ENCODE measurements at regions of chr14 and their contacts with region 1.

Region 1: GRCh38 chr14:49620182-49621113 is at the starts of genes MGAT2 and RPL36AL:
- DNase-seq: peak; percentile 99
- H3K4me3 ChIP-seq: peak within 1 kb of the TSS; percentile 84
- H3K4me3 Mint-ChIP-seq: peak within 1 kb of the TSS; percentile 91
- H3K27ac Mint-ChIP-seq: peak within 1 kb of the TSS; percentile 93
- H3K4me1 ChIP-seq: peaks cover 27% of the 10 kb centered on the region
- H3K4me1 Mint-ChIP-seq: peaks cover 16% of the 10 kb centered on the region
- H3K27me3 ChIP-seq: no peaks in the 10 kb centered on the region
- H3K27me3 Mint-ChIP-seq: no peaks in the 10 kb centered on the region
- CTCF ChIP-seq: peak in 1 of 2 experiments; percentile 28
- total RNA-seq, gene MGAT2: 42.1 and 47.5 TPM in 2 replicates
- total RNA-seq, gene RPL36AL: 181 and 191 TPM in 2 replicates

Region 2: GRCh38 chr14:49598485-49599300 is 21.8 kb before region 1 on chr14 and contains the start of gene LRR1:
- CTCF ChIA-PET with region 1: interaction called, 3 read pairs
- POLR2A ChIA-PET with region 1: interaction called, 14 read pairs
- intact Hi-C with region 1: loop called (anchors 1 kb)
- DNase-seq: peak; percentile 91 to 94
- H3K4me3 ChIP-seq: peak within 1 kb of the TSS; percentile 78
- H3K4me3 Mint-ChIP-seq: peak within 1 kb of the TSS; percentile 97
- H3K27ac Mint-ChIP-seq: peak within 1 kb of the TSS; percentile 97
- H3K4me1 ChIP-seq: peaks cover 24% of the 10 kb centered on the region
- H3K4me1 Mint-ChIP-seq: peaks cover 25% of the 10 kb centered on the region
- H3K27me3 ChIP-seq: no peaks in the 10 kb centered on the region
- H3K27me3 Mint-ChIP-seq: no peaks in the 10 kb centered on the region
- CTCF ChIP-seq: no peak
- total RNA-seq, gene LRR1: 32.0 and 34.8 TPM in 2 replicates

Region 3: GRCh38 chr14:49653508-49653907 is 33.1 kb after region 1 on chr14:
- CTCF ChIA-PET with region 1: no interaction called
- POLR2A ChIA-PET with region 1: no interaction called
- intact Hi-C with region 1: no loop called
- DNase-seq: no peak
- H3K4me3 ChIP-seq: no peak overlapping the region
- H3K4me3 Mint-ChIP-seq: no peak overlapping the region
- H3K27ac Mint-ChIP-seq: no peak overlapping the region
- H3K4me1 ChIP-seq: no peaks in the 10 kb centered on the region
- H3K4me1 Mint-ChIP-seq: no peaks in the 10 kb centered on the region
- H3K27me3 ChIP-seq: no peaks in the 10 kb centered on the region
- H3K27me3 Mint-ChIP-seq: no peaks in the 10 kb centered on the region
- CTCF ChIP-seq: no peak

Region 4: GRCh38 chr14:49703965-49704364 is 83.5 kb after region 1 on chr14:
- CTCF ChIA-PET with region 1: no interaction called
- POLR2A ChIA-PET with region 1: no interaction called
- intact Hi-C with region 1: no loop called
- DNase-seq: no peak
- H3K4me3 ChIP-seq: no peak overlapping the region
- H3K4me3 Mint-ChIP-seq: no peak overlapping the region
- H3K27ac Mint-ChIP-seq: no peak overlapping the region
- H3K4me1 ChIP-seq: no peaks in the 10 kb centered on the region
- H3K4me1 Mint-ChIP-seq: no peaks in the 10 kb centered on the region
- H3K27me3 ChIP-seq: no peaks in the 10 kb centered on the region
- H3K27me3 Mint-ChIP-seq: no peaks in the 10 kb centered on the region
- CTCF ChIP-seq: no peak